Prostate gland (tissue), 2 donors: ENCODE measurements at regions of chr10 and their contacts with region 1.

Region 1: DNA sequence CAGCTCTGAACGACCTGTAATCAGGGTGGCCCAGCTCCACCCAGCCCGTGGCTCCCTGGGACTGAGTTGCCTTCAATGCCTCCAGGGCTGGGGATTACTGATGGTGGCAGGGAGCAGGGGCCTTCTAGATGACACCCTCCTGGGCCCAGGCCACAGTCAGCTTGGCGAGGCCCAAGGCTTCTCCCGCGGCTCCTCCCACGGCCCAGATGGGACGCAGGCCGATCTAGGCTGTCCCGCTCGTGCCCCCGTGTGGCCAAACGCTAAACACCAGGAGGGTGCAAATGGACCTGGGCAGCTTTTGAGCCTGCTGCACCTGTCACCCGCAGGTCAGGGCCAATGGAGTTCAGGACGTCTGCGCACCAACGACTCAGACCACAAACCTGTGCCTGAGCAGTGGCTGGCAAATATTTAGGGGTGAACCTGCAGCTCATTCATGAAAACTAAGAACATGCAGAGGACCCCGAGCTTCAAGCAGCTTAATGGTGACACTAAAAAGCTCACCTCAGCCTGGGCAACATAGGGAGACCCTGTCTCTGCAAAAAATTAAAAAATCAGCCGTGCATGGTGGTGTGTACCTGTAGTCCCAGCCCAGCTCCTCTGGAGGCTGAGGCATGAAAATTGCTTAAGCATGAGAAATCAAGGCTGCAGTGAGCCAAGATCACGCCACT is 43.2 kb downstream of the ASB13 start:
- DNase-seq: peak; percentile 82
- H3K4me3 ChIP-seq: no peak overlapping the region
- H3K27ac ChIP-seq: peak overlapping the region in 1 of 2 donors; percentile 28
- H3K4me1 ChIP-seq: no peaks in the 10 kb centered on the region
- H3K27me3 ChIP-seq: no peaks in the 10 kb centered on the region
- CTCF ChIP-seq: peak; percentile 82 to 95 (median 90)
- POLR2A ChIP-seq: no peak

Region 2: GRCh38 chr10:5525561-5526341 is 97.5 kb before region 1 on chr10:
- intact Hi-C with region 1: loop called (anchors 5 kb)
- DNase-seq: no peak
- H3K4me3 ChIP-seq: no peak overlapping the region
- H3K27ac ChIP-seq: no peak overlapping the region
- H3K4me1 ChIP-seq: no peaks in the 10 kb centered on the region
- H3K27me3 ChIP-seq: no peaks in the 10 kb centered on the region
- CTCF ChIP-seq: no peak
- POLR2A ChIP-seq: no peak

Region 3: DNA sequence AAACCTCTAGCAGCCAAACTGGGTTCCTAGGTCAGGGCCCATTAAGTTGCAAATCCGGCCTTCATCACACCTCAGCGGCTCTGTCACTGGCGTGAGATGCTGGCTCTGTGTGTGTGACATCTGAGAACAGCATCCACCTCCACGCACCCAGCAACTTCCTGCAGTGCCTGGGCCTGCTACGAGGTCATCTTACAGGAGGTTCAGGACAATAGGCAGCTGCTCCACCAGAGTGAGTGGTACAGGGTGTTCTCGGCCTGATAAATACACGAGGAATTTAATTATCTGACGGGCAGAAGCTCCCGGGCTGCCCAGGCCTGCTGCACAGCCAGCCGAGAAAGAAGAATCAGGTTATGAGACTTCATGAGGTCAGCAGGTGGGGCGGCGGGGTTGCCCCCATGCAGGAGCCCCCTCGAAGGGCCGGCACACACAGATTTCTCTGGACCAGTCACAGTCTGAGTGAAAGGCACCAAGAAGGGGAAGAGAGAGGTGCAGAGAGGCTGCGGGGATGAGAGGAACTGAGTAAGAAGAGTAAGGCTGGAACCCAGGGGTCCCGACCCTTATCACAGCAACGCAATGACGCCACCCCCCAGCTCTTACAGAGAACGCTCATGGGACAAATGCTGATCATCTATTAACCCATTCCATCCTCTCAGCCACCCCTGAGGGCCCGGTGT is 49.1 kb before region 1 on chr10:
- intact Hi-C with region 1: loop called (anchors 5 kb)
- DNase-seq: peak; percentile 38
- H3K4me3 ChIP-seq: no peak overlapping the region
- H3K27ac ChIP-seq: peak overlapping the region; percentile 48 to 49
- H3K4me1 ChIP-seq: peaks cover 2% of the 10 kb centered on the region
- H3K27me3 ChIP-seq: no peaks in the 10 kb centered on the region
- CTCF ChIP-seq: no peak
- POLR2A ChIP-seq: no peak

Region 4: GRCh38 chr10:5698062-5698461 is 74.8 kb after region 1 on chr10:
- intact Hi-C with region 1: no loop called
- DNase-seq: no peak
- H3K4me3 ChIP-seq: no peak overlapping the region
- H3K27ac ChIP-seq: no peak overlapping the region
- H3K4me1 ChIP-seq: no peaks in the 10 kb centered on the region
- H3K27me3 ChIP-seq: no peaks in the 10 kb centered on the region
- CTCF ChIP-seq: no peak
- POLR2A ChIP-seq: no peak